Caco-2 (cell line): ENCODE measurements at regions of chr15 and their contacts with region 1.

Region 1: DNA sequence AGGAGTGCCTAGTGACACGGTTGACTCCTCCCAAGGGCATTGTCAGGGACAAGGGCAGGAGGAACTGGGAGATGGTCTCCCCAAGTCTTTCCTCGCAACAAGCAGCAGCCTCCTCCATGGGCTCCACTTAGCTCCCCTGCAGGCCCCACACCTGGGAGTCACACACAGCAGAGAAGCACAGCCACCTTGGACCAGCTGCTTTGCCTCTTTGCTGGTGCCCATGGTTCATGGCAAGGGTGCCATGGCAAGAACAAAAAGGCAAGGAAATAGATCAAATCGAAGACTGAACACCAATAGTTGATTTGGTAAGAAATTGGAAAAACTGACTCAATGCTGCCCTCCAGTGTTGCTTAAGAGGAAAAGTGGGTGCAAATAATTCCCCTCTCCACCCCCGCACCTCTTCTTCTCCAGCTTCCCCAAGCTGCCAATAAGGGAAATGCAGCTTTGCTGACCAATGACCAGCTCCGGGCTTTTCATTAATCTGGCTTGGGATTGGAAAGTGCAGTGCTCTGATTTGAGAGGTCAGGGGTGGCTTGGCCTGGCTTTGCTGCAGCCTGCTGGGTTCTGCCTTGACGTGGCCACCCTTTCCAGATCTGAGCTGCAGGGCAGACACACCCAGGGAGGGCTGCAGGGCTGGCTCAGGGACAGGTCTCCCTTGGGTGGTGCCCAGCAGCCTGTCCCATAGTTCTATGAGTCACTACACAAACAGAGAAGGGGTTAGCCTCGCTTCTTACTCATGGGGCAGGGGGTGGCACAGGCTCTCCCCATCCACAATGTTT is 162.0 kb downstream of the KLF13 start:
- DNase-seq: peak; percentile 60 to 66
- H3K4me3 ChIP-seq: no peak overlapping the region
- H3K4me3 Mint-ChIP-seq: no peak overlapping the region
- H3K27ac Mint-ChIP-seq: peak overlapping the region; percentile 37
- H3K4me1 ChIP-seq: no peaks in the 10 kb centered on the region
- H3K4me1 Mint-ChIP-seq: no peaks in the 10 kb centered on the region
- H3K27me3 ChIP-seq: no peaks in the 10 kb centered on the region
- H3K27me3 Mint-ChIP-seq: peaks cover 6% of the 10 kb centered on the region
- CTCF ChIP-seq: peak; percentile 77 to 89

Region 2: DNA sequence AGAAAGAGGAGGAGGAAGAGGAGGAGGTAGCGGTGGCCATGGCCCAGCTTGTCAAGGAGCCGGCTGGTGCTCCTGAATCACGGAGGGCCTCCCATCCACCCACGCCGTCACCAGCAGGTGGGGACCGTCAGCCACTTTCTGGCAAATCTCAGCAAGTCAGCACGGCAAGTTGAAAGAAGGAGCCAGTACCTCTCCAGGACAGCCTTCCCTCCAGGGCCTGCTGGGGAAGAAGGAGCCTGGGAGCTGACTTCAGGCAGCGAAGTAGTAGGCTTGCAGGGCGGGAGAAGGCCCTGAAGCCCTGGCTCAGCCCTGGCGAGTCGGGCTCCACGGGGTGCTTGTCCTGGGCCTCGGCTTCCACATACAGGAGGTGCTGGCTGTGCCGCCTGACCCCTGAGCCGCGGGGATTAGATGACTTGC is 287.9 kb before region 1 on chr15:
- CTCF ChIA-PET with region 1: interaction called, 14 read pairs
- POLR2A ChIA-PET with region 1: no interaction called
- intact Hi-C with region 1: loop called (anchors 1 kb)
- DNase-seq: peak; percentile 74 to 77
- H3K4me3 ChIP-seq: no peak overlapping the region
- H3K4me3 Mint-ChIP-seq: no peak overlapping the region
- H3K27ac Mint-ChIP-seq: no peak overlapping the region
- H3K4me1 ChIP-seq: no peaks in the 10 kb centered on the region
- H3K4me1 Mint-ChIP-seq: no peaks in the 10 kb centered on the region
- H3K27me3 ChIP-seq: no peaks in the 10 kb centered on the region
- H3K27me3 Mint-ChIP-seq: peaks cover 11% of the 10 kb centered on the region
- CTCF ChIP-seq: peak; percentile 47 to 73

Region 3: GRCh38 chr15:31215490-31216214 is 273.0 kb before region 1 on chr15:
- CTCF ChIA-PET with region 1: interaction called, 8 read pairs
- POLR2A ChIA-PET with region 1: no interaction called
- intact Hi-C with region 1: loop called (anchors 1 kb)
- DNase-seq: peak; percentile 72 to 84
- H3K4me3 ChIP-seq: peak overlapping the region; percentile 57
- H3K4me3 Mint-ChIP-seq: peak overlapping the region; percentile 67
- H3K27ac Mint-ChIP-seq: no peak overlapping the region
- H3K4me1 ChIP-seq: peaks cover 8% of the 10 kb centered on the region; the same call in 1 of the 2 replicates
- H3K4me1 Mint-ChIP-seq: no peaks in the 10 kb centered on the region
- H3K27me3 ChIP-seq: no peaks in the 10 kb centered on the region
- H3K27me3 Mint-ChIP-seq: no peaks in the 10 kb centered on the region
- CTCF ChIP-seq: peak; percentile 93 to 94

Region 4: DNA sequence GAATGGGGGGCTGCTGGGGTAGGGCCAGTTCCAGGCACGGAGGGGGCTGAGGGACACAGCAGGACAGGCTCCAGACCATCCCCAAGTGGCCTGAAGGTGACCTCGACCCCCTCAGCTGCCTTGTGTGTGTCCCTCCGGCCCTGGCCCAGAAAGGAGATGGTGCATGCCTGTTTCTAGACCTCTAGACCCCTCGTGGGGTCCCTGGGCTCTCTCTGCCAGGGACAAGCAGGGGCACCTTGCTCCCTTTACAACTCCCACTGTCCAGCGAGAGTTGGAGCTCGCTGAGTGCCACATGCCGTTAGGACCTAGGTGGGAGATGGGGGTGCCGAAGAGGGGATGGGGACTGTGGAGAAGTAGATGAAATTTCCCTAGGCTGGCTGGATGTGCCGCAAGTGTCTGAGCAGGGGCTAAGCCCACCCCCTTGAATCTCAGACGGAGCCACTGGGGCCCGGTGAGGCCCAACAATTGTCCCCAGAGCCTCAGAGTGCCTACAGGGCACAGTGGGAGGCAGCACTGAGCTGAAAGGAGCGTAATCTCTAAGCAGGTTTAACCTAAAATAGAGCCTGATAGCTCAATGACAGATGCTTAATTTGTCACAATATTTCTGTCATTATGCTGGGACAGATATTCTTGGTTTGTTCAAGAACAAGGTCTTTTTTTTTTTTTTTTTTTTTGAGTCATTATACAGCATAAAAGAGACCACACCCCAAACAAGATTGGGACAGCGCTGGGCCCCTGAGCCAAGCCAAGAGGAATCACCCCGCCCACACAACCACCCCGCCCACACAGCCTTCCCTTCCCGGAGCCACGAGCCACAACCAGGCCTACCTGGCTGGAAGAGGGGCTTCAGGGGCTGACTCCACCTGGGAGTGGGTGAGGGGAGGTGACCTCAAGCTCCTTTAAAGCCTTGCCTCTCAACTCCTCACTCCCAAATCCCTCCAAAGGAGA is 185.6 kb before region 1 on chr15:
- CTCF ChIA-PET with region 1: interaction called, 10 read pairs
- POLR2A ChIA-PET with region 1: no interaction called
- intact Hi-C with region 1: no loop called
- DNase-seq: no peak
- H3K4me3 ChIP-seq: no peak overlapping the region
- H3K4me3 Mint-ChIP-seq: no peak overlapping the region
- H3K27ac Mint-ChIP-seq: peak overlapping the region; percentile 47
- H3K4me1 ChIP-seq: peaks cover 7% of the 10 kb centered on the region
- H3K4me1 Mint-ChIP-seq: no peaks in the 10 kb centered on the region
- H3K27me3 ChIP-seq: no peaks in the 10 kb centered on the region
- H3K27me3 Mint-ChIP-seq: no peaks in the 10 kb centered on the region
- CTCF ChIP-seq: no peak

Region 5: GRCh38 chr15:31440754-31441311 is 47.8 kb before region 1 on chr15:
- CTCF ChIA-PET with region 1: interaction called, 3 read pairs
- POLR2A ChIA-PET with region 1: no interaction called
- intact Hi-C with region 1: loop called (anchors 1 kb)
- DNase-seq: peak in 1 of 2 experiments; percentile 27
- H3K4me3 ChIP-seq: peak overlapping the region; percentile 45
- H3K4me3 Mint-ChIP-seq: peak overlapping the region; percentile 61
- H3K27ac Mint-ChIP-seq: no peak overlapping the region
- H3K4me1 ChIP-seq: no peaks in the 10 kb centered on the region
- H3K4me1 Mint-ChIP-seq: peaks cover 9% of the 10 kb centered on the region
- H3K27me3 ChIP-seq: no peaks in the 10 kb centered on the region
- H3K27me3 Mint-ChIP-seq: no peaks in the 10 kb centered on the region
- CTCF ChIP-seq: no peak

Region 6: DNA sequence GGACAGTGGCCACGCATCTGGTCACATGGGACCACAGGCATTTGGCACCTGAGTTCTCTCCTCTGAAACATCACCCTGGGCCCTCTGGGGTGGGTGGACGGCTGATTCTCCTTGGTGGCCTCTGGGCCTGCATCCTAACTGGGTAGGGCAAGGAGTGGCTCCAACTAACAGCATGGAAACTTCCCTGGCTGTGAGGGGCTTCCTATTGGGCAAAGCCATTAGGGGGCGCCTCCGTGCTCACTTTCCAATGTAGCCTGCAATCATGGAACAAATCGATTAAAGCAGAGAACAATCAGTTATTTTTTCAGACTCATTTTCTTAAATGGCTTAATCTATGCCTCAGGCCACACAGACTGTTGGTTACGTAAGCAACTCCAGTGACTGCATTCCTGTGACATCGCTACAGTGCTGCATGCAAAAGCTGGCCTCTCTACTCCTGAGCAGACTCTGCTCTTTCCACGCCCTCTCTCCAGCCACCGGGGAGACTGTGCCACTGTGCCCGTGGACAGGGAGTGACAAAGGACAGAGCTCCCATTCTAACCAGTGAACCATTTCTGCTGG is 116.8 kb after region 1 on chr15:
- CTCF ChIA-PET with region 1: no interaction called
- POLR2A ChIA-PET with region 1: no interaction called
- intact Hi-C with region 1: no loop called
- DNase-seq: peak in 1 of 2 experiments; percentile 22
- H3K4me3 ChIP-seq: no peak overlapping the region
- H3K4me3 Mint-ChIP-seq: no peak overlapping the region
- H3K27ac Mint-ChIP-seq: no peak overlapping the region
- H3K4me1 ChIP-seq: no peaks in the 10 kb centered on the region
- H3K4me1 Mint-ChIP-seq: no peaks in the 10 kb centered on the region
- H3K27me3 ChIP-seq: no peaks in the 10 kb centered on the region
- H3K27me3 Mint-ChIP-seq: peaks cover 4% of the 10 kb centered on the region
- CTCF ChIP-seq: no peak

Region 7: GRCh38 chr15:31792611-31793385 is 304.2 kb after region 1 on chr15:
- CTCF ChIA-PET with region 1: no interaction called
- POLR2A ChIA-PET with region 1: no interaction called
- intact Hi-C with region 1: no loop called
- DNase-seq: no peak
- H3K4me3 ChIP-seq: no peak overlapping the region
- H3K4me3 Mint-ChIP-seq: no peak overlapping the region
- H3K27ac Mint-ChIP-seq: no peak overlapping the region
- H3K4me1 ChIP-seq: no peaks in the 10 kb centered on the region
- H3K4me1 Mint-ChIP-seq: no peaks in the 10 kb centered on the region
- H3K27me3 ChIP-seq: no peaks in the 10 kb centered on the region
- H3K27me3 Mint-ChIP-seq: peaks cover 16% of the 10 kb centered on the region
- CTCF ChIP-seq: no peak